Ovary (tissue), 10 donors: ENCODE measurements at regions of chr9 and their contacts with region 1.

Region 1: DNA sequence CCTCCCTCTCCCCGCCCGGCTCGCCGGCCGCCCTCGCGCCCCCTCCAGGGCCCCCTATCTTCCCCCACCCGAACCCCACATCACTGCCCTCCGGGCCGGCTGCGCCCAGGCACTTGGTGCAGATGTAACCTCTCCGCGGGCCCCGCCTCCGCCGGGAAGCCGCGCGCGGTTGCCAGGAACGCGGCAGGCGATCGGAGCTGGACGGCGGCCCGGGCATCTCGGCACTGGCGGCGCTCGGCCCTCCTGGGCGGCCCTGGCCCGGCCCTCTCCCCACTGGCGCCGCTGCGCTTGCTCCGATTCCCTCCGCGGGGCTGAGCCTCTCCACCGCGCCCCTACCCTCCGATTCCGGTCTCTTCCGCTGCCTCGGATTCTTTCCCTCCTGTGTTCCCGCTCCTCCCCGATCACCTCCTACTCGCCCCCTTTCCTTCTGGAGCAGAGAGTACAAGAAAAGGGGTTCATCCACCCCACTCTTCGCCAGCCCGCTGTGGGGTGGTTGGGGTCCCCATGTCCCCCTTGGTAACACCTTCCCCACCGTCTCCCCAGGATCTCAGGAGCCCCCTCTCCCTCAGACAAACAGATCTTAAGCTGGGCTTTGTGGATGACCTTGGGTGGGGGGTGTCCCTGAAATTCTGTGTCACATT is 70.6 kb downstream of the C9orf50 start:
- DNase-seq: peak; percentile 88 to 94 (median 92)
- H3K4me3 ChIP-seq: peak overlapping the region; percentile 49
- H3K27ac ChIP-seq: peak overlapping the region; percentile 81 to 84
- H3K4me1 ChIP-seq: peaks cover 4% of the 10 kb centered on the region
- H3K27me3 ChIP-seq: no peaks in the 10 kb centered on the region
- CTCF ChIP-seq: no peak
- EP300 ChIP-seq: peak; percentile 68
- POLR2A ChIP-seq: no peak

Region 2: DNA sequence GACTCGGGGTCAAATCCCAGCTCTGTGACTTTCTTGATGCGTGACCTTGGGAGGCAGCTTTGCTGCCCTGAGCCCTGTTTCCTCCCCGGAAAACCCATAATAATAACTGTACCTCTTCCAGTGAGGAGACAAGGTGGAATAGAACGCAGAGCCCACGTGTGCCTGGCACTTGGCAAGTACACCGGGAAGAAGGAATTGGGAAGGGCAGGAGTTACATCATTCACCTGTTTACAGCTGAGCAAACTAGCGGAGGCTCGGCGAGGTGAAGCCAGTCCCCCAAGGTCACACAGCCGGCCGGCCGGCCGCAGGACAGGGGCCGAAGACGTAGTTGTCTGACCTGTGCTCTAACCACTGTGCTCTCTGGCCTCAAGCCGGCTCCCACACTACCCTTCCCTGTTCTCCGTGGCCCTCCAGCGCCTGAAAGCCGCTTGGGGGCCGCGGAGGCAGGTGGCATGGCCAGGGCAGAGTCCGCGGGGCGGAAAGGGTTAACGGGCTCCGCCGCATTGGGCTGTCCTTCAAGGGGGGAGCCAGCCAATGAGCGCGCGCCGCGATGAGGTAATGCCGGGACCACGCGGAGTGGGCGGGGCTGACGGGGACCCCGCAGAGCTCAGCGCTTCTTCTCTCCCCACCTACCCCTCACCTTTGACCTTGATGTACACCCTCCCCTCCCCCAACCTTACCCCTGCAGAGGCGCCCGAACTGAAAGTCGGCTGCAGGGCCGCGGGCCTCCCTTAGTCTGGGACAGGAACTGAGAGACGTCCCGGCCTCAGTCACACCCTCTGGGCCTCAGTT is 54.6 kb before region 1 on chr9:
- intact Hi-C with region 1: loop called in 3 of 4 experiments (anchors 2 to 5 kb)
- DNase-seq: peak; percentile 95 to 98 (median 96)
- H3K4me3 ChIP-seq: peak overlapping the region; percentile 55
- H3K27ac ChIP-seq: peak overlapping the region; percentile 96 to 98
- H3K4me1 ChIP-seq: peaks cover 25% of the 10 kb centered on the region
- H3K27me3 ChIP-seq: no peaks in the 10 kb centered on the region
- CTCF ChIP-seq: no peak
- EP300 ChIP-seq: peak; percentile 49
- POLR2A ChIP-seq: peak; percentile 16

Region 3: DNA sequence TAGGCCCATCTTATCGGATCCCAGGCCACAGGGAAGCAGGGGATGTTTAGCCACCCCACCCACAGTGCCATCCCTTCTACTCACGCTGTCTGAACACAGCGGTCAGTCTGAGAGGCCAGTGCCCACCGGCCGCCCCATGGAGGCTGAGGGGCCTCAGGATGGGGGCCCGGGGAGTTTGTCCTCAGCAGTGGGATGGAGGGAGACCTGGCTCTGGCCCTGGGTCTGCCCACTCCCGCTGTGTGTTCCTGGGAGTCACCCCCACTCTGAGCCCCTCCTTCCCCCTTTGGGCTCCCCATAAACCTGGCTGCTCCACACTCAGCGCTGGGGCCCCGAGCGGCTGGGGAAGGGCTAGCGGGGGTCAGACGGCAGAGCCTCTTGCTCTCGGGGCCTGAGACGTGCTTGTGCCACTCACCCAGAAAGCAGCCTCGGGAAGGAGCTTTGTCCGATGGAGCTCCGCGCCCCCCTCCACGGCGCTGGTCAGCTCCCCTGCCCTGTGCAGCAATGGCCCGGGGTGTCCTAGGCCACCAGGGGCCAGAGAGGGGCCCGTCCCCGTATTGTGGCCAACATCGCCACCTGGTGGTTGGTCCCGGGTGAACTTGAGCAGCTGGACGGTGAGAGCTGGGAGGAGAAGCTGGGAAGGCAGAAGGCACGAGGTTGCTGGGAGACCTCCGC is 1447.7 kb after region 1 on chr9:
- intact Hi-C with region 1: loop called in 1 of 4 experiments (anchors 5 kb)
- DNase-seq: peak in 1 of 5 donors; percentile 52
- H3K4me3 ChIP-seq: no peak overlapping the region
- H3K27ac ChIP-seq: no peak overlapping the region
- H3K4me1 ChIP-seq: no peaks in the 10 kb centered on the region
- H3K27me3 ChIP-seq: no peaks in the 10 kb centered on the region
- CTCF ChIP-seq: peak in 1 of 3 donors; percentile 15
- EP300 ChIP-seq: no peak
- POLR2A ChIP-seq: no peak